ENCODE measurements at regions of chr4 and their contacts with region 1.

Region 1: GRCh38 chr4:38663801-38664705 is at the start of gene KLF3:
- DNase-seq: peak; percentile 86 to 97
- H3K4me3 ChIP-seq: peak within 1 kb of the TSS; percentile 83 to 99
- H3K27ac ChIP-seq: peak within 1 kb of the TSS; percentile 96 to 99
- H3K4me1 ChIP-seq: peaks cover 6 to 22% of the 10 kb centered on the region in 2 donors
- H3K27me3 ChIP-seq: no peaks in the 10 kb centered on the region
- CTCF ChIP-seq: no peak
- total RNA-seq, gene KLF3: 21.5 TPM

Region 2: GRCh38 chr4:37891260-37892159 is 772.5 kb before region 1 on chr4:
- intact Hi-C with region 1: loop called (anchors 10 kb)
- DNase-seq: peak; percentile 15 to 77
- H3K4me3 ChIP-seq: peak overlapping the region; percentile 73 to 98
- H3K27ac ChIP-seq: peak overlapping the region; percentile 97
- H3K4me1 ChIP-seq: peaks cover 0 to 27% of the 10 kb centered on the region in 2 donors
- H3K27me3 ChIP-seq: no peaks in the 10 kb centered on the region
- CTCF ChIP-seq: peak in 1 of 3 experiments; percentile 24

Region 3: GRCh38 chr4:38210391-38211114 is 453.5 kb before region 1 on chr4:
- intact Hi-C with region 1: loop called (anchors 2 kb)
- DNase-seq: peak in 1 of 2 donors; percentile 72
- H3K4me3 ChIP-seq: peak overlapping the region in 1 of 2 donors; percentile 21
- H3K27ac ChIP-seq: peak overlapping the region; percentile 76 to 89
- H3K4me1 ChIP-seq: peaks cover 0 to 17% of the 10 kb centered on the region in 2 donors
- H3K27me3 ChIP-seq: no peaks in the 10 kb centered on the region
- CTCF ChIP-seq: no peak

Region 4: DNA sequence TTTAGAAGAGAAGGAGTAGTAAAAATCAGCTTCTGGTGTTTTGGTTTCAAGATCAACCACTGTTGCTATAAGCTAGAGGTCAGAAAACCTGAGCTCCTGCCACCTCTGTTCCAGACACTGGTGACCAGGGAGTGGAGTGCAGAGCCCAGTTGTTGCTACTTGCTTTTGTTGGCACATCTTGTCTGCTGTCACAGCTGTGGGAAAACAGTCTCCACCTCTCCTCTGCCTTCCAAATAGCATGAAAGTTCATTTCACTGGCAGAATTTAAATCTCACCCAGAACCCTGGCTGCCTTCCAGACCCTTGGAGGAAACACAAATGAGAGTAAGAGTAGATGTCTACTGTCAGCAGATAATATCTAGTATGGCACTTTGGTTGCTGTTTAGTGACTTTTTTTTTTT is 297.6 kb before region 1 on chr4:
- intact Hi-C with region 1: loop called (anchors 5 kb)
- DNase-seq: peak in 1 of 2 donors; percentile 82
- H3K4me3 ChIP-seq: no peak overlapping the region
- H3K27ac ChIP-seq: peak overlapping the region; percentile 68 to 74
- H3K4me1 ChIP-seq: peaks cover 0 to 29% of the 10 kb centered on the region in 2 donors
- H3K27me3 ChIP-seq: no peaks in the 10 kb centered on the region
- CTCF ChIP-seq: no peak

Region 5: GRCh38 chr4:38800956-38801450 is 136.9 kb after region 1 on chr4:
- intact Hi-C with region 1: no loop called
- DNase-seq: no peak
- H3K4me3 ChIP-seq: no peak overlapping the region
- H3K27ac ChIP-seq: no peak overlapping the region
- H3K4me1 ChIP-seq: no peaks in the 10 kb centered on the region
- H3K27me3 ChIP-seq: no peaks in the 10 kb centered on the region
- CTCF ChIP-seq: no peak

Region 6: GRCh38 chr4:39044364-39044955 is 380.4 kb after region 1 on chr4:
- intact Hi-C with region 1: loop called (anchors 10 kb)
- DNase-seq: peak; percentile 81 to 95
- H3K4me3 ChIP-seq: peak overlapping the region; percentile 85 to 93
- H3K27ac ChIP-seq: peak overlapping the region; percentile 77 to 87
- H3K4me1 ChIP-seq: no peaks in the 10 kb centered on the region
- H3K27me3 ChIP-seq: no peaks in the 10 kb centered on the region
- CTCF ChIP-seq: no peak